ENCODE measurements at regions of chr14 and their contacts with region 1.

Region 1: DNA sequence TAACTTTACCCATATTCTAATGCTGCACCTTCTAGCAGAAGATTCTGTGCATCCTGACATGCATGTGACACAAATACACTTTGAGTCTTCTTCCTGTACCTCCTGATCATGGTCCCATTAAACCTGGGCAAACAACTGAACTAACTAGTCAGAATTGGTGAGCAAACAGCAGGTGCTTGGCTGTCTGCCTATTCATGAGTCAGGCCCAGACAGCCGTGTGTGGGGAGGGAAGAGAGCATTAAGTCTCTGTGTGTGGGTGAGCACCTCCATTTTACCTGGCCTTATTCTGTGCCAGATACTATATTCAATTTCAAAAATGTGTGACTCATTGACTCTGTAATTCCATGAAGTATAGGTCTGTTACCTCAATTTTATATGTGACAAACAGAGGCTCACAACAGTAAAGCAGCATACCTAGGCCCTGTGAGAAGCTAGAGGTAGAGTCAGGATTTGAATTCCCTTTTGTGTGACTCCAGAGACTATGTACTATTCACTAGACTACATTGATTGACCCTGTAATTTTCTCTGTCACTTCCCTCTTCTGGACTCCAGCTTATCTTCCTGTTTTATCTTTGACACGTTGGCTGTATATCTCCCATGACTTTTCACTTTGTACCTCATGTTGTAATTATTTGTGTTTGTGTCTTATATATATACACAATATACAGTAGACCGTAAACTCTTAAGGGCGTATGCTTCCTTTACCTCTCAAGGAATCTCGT is 32.2 kb downstream of the SUSD6 start:
- DNase-seq: peak; percentile 66
- H3K4me3 Mint-ChIP-seq: peak overlapping the region; percentile 45
- H3K27ac Mint-ChIP-seq: peak overlapping the region; percentile 82
- H3K4me1 Mint-ChIP-seq: peaks cover 67% of the 10 kb centered on the region
- H3K27me3 Mint-ChIP-seq: no peaks in the 10 kb centered on the region

Region 2: DNA sequence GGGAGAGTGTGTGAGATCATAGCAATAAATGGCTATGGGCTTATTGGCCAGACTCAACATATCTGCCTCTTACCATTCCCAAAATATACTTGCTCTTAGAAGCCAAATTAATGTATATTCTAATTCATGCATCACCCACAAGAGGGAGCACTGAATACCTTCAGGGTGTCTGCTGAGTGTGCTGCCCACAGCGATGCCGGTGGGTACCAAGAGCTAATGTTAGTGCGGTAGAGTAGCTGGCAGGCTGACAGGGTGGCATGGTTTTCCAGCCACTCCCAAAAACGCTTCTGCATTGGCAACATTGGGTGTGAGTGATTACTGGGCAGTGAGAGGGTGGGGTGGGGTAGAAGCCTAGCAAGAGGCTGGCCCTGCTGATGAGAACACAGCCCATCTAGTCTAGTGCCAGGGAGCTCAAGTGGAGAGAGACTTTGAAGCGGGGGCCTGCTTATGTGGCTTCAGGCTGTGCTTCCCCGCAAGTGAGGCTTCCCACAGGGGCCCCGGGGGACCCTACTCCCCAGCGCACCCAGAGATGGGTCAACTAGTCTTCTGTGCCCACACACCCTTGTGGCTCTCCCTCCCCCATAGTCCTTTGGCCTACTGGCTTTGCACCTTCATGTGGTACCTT is 168.3 kb before region 1 on chr14:
- intact Hi-C with region 1: no loop called
- DNase-seq: no peak
- H3K4me3 Mint-ChIP-seq: no peak overlapping the region
- H3K27ac Mint-ChIP-seq: peak overlapping the region; percentile 17
- H3K4me1 Mint-ChIP-seq: peaks cover 2% of the 10 kb centered on the region
- H3K27me3 Mint-ChIP-seq: peaks cover 7% of the 10 kb centered on the region

Region 3: DNA sequence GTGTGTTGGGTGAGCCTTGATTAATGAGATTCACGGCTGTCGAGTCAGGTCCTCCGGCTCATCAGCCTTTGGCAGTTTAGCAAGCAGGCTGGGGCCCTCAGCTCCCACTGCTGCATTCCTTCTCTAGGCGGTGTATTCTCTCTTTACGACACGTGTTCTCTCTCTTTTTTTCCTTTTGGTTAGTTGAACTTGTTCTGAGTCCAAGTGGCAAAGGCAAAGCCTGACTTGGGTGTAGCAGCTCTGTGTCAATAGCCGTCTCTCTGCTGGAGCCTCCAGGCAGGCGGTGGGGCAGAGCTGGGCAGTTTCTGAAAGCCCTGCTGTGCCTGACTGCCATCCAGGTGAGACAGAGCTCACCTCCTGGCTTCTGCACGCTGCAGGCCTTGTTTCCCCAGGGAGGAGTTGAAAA is 14.3 kb after region 1 on chr14:
- intact Hi-C with region 1: loop called (anchors 2 kb)
- DNase-seq: no peak
- H3K4me3 Mint-ChIP-seq: no peak overlapping the region
- H3K27ac Mint-ChIP-seq: peak overlapping the region; percentile 90
- H3K4me1 Mint-ChIP-seq: peaks cover 70% of the 10 kb centered on the region
- H3K27me3 Mint-ChIP-seq: no peaks in the 10 kb centered on the region

Region 4: DNA sequence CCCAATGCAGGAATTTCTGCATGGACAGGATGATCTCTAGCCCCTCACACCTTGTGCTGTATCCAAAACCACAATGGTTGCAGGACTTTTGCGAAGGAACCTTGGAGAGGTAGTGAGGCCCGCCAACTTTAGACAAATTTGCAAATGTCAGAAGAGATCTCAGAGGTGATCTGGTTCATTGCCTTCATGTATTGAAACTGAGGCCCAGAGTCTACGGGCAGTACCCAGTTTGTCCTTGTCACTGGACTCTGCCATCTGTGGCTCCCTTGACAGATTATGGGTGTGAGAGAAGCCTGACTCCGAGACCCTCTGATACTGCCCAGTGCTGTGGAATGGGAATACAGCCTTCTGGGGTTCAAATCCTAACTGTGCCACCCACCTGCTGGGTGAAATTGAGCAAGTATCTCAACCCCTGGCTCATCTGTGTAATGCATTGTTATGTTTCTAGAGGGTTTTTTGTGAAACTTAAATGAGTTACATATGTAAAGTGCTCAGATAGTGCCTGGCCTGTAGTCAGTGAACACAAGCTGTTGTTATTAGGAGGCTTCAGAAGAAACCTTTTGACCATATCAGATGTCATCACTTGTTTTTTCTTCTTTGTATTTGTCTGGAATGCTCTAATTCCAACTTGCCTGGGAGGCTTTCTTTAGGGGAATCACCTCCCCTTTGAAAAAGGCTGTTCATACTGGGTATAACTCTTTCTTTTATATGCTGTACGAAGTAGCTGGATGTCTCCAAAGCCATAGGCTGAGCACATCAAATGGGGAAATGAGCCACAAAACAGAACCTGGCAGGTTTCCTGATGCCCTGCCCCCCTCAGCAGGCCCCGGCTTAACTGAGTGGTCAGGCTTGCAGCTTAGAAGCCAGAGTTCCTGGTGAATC is 52.0 kb after region 1 on chr14:
- intact Hi-C with region 1: no loop called
- DNase-seq: no peak
- H3K4me3 Mint-ChIP-seq: peak overlapping the region; percentile 53
- H3K27ac Mint-ChIP-seq: peak overlapping the region; percentile 71
- H3K4me1 Mint-ChIP-seq: peaks cover 72% of the 10 kb centered on the region
- H3K27me3 Mint-ChIP-seq: no peaks in the 10 kb centered on the region